Natural killer cell (primary cell): ENCODE measurements at regions of chrX and their contacts with region 1.

Region 1: GRCh38 chrX:107168257-107168656 is 38.0 kb downstream of the NUP62CL start:
- DNase-seq: no peak
- ATAC-seq: no peak
- H3K4me3 ChIP-seq: no peak overlapping the region
- H3K4me3 Mint-ChIP-seq: no peak overlapping the region
- H3K27ac ChIP-seq: no peak overlapping the region
- H3K27ac Mint-ChIP-seq: no peak overlapping the region
- H3K4me1 ChIP-seq: no peaks in the 10 kb centered on the region
- H3K4me1 Mint-ChIP-seq: peaks cover 10 to 11% of the 10 kb centered on the region in 2 donors
- H3K27me3 ChIP-seq: no peaks in the 10 kb centered on the region
- H3K27me3 Mint-ChIP-seq: peaks cover 25 to 61% of the 10 kb centered on the region in 2 donors
- CTCF ChIP-seq: no peak

Region 2: DNA sequence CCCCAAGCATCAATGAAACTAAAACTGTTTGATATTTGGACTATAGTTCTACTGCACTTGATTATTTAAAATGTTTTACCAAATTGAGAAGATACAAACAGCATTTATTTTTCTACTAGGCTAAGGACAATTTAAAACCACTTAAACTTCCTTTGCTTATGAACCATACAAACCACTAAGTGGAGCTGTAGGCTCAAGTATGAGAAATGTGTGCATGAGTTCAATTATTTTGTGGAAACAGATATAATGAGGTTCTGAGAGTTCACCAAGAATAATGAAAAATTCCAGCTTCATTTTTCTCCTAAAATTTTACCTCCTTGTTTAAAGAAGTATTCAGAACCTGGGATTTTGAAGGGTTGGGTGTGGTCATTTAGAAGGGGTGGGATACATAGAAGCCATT is 1192.9 kb before region 1 on chrX:
- intact Hi-C with region 1: no loop called
- DNase-seq: no peak
- ATAC-seq: no peak
- H3K4me3 ChIP-seq: no peak overlapping the region
- H3K4me3 Mint-ChIP-seq: no peak overlapping the region
- H3K27ac ChIP-seq: no peak overlapping the region
- H3K27ac Mint-ChIP-seq: no peak overlapping the region
- H3K4me1 ChIP-seq: no peaks in the 10 kb centered on the region
- H3K4me1 Mint-ChIP-seq: no peaks in the 10 kb centered on the region
- H3K27me3 ChIP-seq: no peaks in the 10 kb centered on the region
- H3K27me3 Mint-ChIP-seq: peaks cover 0 to 14% of the 10 kb centered on the region in 2 donors
- CTCF ChIP-seq: no peak

Region 3: DNA sequence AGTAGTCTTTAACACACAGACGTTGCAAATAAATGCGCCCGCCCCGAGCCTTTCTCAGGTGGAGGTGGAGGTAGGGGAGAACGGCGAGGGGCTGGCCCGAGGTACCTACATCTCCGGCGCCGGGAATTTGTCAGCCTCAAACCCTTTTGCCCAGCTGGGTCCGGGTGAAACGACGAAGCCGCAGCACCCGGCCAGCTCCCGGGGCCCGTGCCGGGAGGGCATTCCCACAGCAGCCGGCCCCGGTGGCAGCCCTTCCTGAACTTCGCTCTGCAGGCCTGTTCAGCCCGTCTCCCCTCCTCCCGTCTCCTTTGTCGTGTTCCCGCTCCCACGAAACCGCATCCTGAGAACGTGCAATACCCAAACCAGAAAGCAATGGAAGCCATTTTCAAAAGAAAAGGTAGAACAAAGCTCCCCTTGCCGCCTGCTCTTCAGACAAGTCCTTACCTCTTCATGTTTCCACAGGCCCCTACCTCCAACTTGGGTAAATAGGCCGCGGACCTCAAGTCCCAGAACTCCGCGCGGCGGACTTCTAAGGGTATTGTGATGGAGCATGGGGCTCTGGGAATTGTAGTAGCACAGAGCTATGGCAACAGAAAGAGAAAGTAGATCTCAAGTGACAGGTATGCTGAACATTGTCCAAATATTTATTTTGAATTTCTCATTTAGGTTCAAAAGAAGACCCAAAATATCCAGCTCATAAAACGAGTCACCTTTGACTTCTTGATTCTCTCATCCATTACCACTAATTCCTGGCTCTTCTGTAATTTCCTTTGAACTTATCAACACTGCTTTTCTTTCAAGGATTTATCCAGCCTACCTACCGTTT is 49.7 kb before region 1 on chrX and contains the start of gene RBM41:
- intact Hi-C with region 1: loop called (anchors 5 kb)
- DNase-seq: peak; percentile 45 to 85
- ATAC-seq: peak; percentile 98 to 99 (median 99)
- H3K4me3 ChIP-seq: peak within 1 kb of the TSS; percentile 54
- H3K4me3 Mint-ChIP-seq: peak within 1 kb of the TSS; percentile 93
- H3K27ac ChIP-seq: peak within 1 kb of the TSS; percentile 72
- H3K27ac Mint-ChIP-seq: peak within 1 kb of the TSS; percentile 71 to 90
- H3K4me1 ChIP-seq: no peaks in the 10 kb centered on the region
- H3K4me1 Mint-ChIP-seq: peaks cover 8 to 38% of the 10 kb centered on the region in 2 donors
- H3K27me3 ChIP-seq: no peaks in the 10 kb centered on the region
- H3K27me3 Mint-ChIP-seq: peaks cover 0 to 9% of the 10 kb centered on the region in 2 donors
- CTCF ChIP-seq: no peak
- total RNA-seq, gene RBM41: 14.6 to 18.0 (median 15.3) TPM

Region 4: GRCh38 chrX:107205770-107206696 is 37.8 kb after region 1 on chrX and contains the starts of genes DNAAF6 and NUP62CL:
- intact Hi-C with region 1: loop called (anchors 5 kb)
- DNase-seq: peak; percentile 47 to 79
- ATAC-seq: peak; percentile 82 to 89 (median 87)
- H3K4me3 ChIP-seq: peak within 1 kb of the TSS; percentile 46
- H3K4me3 Mint-ChIP-seq: peak within 1 kb of the TSS; percentile 83
- H3K27ac ChIP-seq: no peak within 1 kb of the TSS
- H3K27ac Mint-ChIP-seq: peak within 1 kb of the TSS in 1 of 2 donors; percentile 78
- H3K4me1 ChIP-seq: peaks cover 6% of the 10 kb centered on the region
- H3K4me1 Mint-ChIP-seq: peaks cover 6 to 8% of the 10 kb centered on the region in 2 donors
- H3K27me3 ChIP-seq: no peaks in the 10 kb centered on the region
- H3K27me3 Mint-ChIP-seq: peaks cover 0 to 3% of the 10 kb centered on the region in 2 donors
- CTCF ChIP-seq: no peak
- total RNA-seq, gene DNAAF6: not detected
- total RNA-seq, gene NUP62CL: 0.82 to 3.1 (median 1.2) TPM